ENCODE measurements at regions of chr5 and their contacts with region 1.

Region 1: DNA sequence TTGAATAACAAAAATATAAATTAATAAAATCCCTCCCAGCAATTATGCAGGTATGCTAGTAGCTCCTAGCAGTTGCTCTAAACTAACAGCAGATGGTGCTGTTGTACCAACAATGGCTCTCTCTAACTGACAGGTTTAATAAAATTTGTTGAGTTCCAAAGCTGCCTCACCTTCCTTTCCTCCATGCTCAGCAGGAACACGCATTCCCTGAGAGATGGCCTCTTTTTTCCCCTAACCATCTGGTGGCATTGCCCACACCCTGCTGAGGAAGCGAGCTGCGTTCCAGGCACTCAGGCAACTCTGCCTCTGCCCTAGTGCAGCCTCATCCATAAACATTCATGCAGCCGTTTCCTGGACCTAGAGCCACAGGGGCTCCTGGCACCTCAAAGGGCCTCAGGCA is 106.2 kb downstream of the KLHL3 start:
- DNase-seq: peak; percentile 46
- ATAC-seq: peak; percentile 88
- H3K4me3 Mint-ChIP-seq: peak overlapping the region; percentile 30; the same call in 1 of the 2 replicates
- H3K27ac Mint-ChIP-seq: no peak overlapping the region
- H3K4me1 Mint-ChIP-seq: peaks cover 10% of the 10 kb centered on the region
- H3K27me3 Mint-ChIP-seq: no peaks in the 10 kb centered on the region
- CTCF ChIP-seq: peak; percentile 92

Region 2: DNA sequence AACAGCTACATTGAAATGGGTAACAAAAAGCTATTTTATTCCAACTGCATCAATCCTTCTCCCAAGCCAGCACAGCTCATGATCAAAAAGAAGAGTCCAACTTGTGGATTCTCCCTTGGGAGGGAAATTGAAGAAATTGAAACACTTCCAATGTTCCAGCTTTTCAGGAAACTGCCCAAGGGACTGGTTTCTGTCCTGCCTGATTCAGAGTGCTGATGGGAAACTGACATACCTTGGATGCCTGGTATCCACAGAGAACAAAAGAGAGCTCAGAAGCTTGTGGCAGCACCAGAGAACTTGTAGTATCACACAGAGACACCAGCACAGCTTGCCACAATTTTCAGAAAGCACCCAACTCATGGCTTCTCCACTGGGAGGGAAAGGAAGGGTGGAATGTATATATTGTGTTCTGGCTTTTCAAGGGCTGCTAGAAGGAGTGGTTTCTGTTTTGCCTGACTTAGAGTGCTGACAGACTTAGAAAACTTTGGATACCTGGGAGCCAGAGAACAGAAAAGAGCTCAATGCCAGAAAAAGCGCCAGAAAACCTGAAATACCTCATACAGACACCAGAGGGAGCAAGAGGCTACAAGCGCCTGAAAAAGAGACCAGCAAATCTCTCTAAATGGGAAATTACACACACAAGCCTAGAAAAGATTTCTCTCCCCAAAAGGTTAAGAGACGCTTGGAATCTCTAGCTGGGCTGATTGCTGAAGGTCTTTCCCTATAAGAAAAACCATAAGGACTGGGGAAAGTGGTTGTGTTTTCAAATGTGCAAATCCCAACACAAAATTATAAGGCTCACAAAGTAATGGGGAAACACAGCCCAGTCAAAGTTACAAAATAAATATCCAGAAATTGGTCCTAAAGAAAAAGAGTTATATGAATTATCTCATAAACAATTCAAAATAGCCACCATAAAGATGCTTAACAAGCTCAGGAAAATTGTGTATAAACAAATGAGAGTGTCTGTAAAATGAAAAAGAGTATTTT is 309.3 kb before region 1 on chr5:
- CTCF ChIA-PET with region 1: interaction called, 12 read pairs
- POLR2A ChIA-PET with region 1: no interaction called
- DNase-seq: peak; percentile 36
- ATAC-seq: peak; percentile 95
- H3K4me3 Mint-ChIP-seq: no peak overlapping the region
- H3K27ac Mint-ChIP-seq: peak overlapping the region; percentile 79
- H3K4me1 Mint-ChIP-seq: peaks cover 12% of the 10 kb centered on the region; the same call in 1 of the 2 replicates
- H3K27me3 Mint-ChIP-seq: no peaks in the 10 kb centered on the region
- CTCF ChIP-seq: peak; percentile 77

Region 3: GRCh38 chr5:137589185-137589584 is 40.5 kb before region 1 on chr5:
- CTCF ChIA-PET with region 1: no interaction called
- POLR2A ChIA-PET with region 1: no interaction called
- DNase-seq: no peak
- ATAC-seq: no peak
- H3K4me3 Mint-ChIP-seq: no peak overlapping the region
- H3K27ac Mint-ChIP-seq: no peak overlapping the region
- H3K4me1 Mint-ChIP-seq: no peaks in the 10 kb centered on the region
- H3K27me3 Mint-ChIP-seq: peaks cover 11% of the 10 kb centered on the region
- CTCF ChIP-seq: no peak

Region 4: GRCh38 chr5:137619191-137619870 is 10.3 kb before region 1 on chr5:
- CTCF ChIA-PET with region 1: interaction called, 25 read pairs
- POLR2A ChIA-PET with region 1: no interaction called
- DNase-seq: no peak
- ATAC-seq: no peak
- H3K4me3 Mint-ChIP-seq: no peak overlapping the region
- H3K27ac Mint-ChIP-seq: no peak overlapping the region
- H3K4me1 Mint-ChIP-seq: 0 out of 2 replicates have a peak, but pooled peaks cover 2% of the 10 kb centered on the region
- H3K27me3 Mint-ChIP-seq: no peaks in the 10 kb centered on the region
- CTCF ChIP-seq: no peak

Region 5: DNA sequence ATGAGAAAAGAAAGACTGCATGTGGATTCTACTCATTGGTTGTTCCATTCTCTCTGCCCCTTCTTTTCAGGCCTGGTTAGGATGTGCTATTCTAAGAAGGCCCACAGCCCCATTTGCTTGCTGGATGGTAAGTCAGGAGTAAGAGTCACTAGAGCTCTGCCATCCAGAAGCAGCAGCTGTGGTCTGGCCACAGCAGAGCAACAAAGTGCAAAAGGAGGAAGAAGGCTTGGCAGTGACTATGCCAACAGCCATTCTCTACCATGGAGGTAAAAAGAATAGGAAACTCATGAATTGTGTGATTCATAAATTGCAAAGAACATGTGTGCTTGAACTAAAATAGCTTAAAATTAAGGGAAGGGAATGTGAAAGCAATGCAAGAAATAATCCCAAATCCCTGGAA is 85.3 kb after region 1 on chr5:
- CTCF ChIA-PET with region 1: interaction called, 12 read pairs
- POLR2A ChIA-PET with region 1: no interaction called
- DNase-seq: no peak
- ATAC-seq: no peak
- H3K4me3 Mint-ChIP-seq: no peak overlapping the region
- H3K27ac Mint-ChIP-seq: no peak overlapping the region
- H3K4me1 Mint-ChIP-seq: no peaks in the 10 kb centered on the region
- H3K27me3 Mint-ChIP-seq: no peaks in the 10 kb centered on the region
- CTCF ChIP-seq: no peak

Region 6: DNA sequence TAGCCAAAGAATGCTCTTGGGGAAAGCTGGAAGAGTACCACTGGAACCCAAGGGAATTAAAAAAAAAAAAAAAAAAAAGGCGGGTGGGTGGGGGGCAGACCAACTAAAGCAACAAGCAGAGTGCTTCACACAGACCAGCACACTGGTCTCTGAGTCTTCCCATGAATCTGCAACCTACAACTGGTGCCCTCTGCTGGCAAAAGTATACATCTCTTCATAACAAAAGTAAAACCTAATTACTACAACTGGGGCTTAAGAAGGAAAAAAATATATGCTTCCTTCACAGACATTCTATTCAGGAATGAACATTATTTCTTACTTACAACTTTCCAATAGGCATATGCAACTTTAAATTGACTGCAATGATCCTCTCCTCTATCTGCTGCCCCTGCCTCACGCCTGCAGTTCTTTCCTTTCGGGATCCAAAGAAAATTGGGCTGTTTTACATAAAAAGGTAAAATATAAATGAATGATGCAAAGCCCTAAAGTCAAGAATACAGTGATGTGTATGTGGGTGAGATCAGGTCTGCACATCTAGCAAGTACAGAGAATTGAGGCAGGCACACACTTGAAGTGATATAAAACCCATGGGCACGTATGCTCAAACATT is 113.5 kb after region 1 on chr5:
- CTCF ChIA-PET with region 1: interaction called, 135 read pairs
- POLR2A ChIA-PET with region 1: no interaction called
- DNase-seq: peak; percentile 43
- ATAC-seq: peak; percentile 87
- H3K4me3 Mint-ChIP-seq: no peak overlapping the region
- H3K27ac Mint-ChIP-seq: no peak overlapping the region
- H3K4me1 Mint-ChIP-seq: peaks cover 8% of the 10 kb centered on the region; the same call in 1 of the 2 replicates
- H3K27me3 Mint-ChIP-seq: no peaks in the 10 kb centered on the region; the same call in 1 of the 2 replicates
- CTCF ChIP-seq: peak; percentile 37; the same call in 1 of the 2 replicates

Region 7: GRCh38 chr5:137822158-137822764 is 192.6 kb after region 1 on chr5:
- CTCF ChIA-PET with region 1: interaction called, 34 read pairs
- POLR2A ChIA-PET with region 1: no interaction called
- DNase-seq: peak; percentile 63
- ATAC-seq: peak; percentile 92
- H3K4me3 Mint-ChIP-seq: no peak overlapping the region
- H3K27ac Mint-ChIP-seq: no peak overlapping the region
- H3K4me1 Mint-ChIP-seq: peaks cover 19% of the 10 kb centered on the region
- H3K27me3 Mint-ChIP-seq: no peaks in the 10 kb centered on the region
- CTCF ChIP-seq: no peak